ENCODE measurements at regions of chr18 and their contacts with region 1.

Region 1: DNA sequence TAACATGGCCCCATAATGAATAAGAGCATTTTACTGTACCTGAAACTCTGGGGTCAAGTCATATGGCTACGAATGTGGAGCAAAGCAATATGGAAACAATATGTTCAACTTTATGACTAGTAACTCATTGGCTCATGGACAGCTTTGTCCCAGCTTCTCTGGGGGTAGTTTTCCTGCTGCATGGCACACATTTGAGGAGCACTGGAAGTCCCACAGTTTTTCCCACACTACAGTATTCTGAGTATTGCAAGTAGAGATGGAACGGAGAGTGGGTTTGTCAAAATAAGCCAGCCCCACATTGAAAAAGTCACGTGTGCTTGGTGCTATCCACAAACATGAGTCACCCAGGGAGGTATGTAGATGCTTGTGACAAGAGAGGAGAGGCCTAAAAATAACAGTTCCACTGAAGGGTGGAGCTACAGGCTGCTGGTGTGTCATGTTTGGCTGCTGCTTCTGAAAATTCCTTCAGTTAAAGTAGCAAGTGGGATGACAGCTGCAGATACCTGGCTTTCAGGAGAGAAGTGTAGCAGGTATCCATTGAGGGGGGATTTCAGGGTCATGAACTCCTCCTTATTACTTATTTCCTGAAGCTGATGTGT is 48.2 kb upstream of the CTAGE1 start:
- DNase-seq: peak; percentile 94
- ATAC-seq: peak; percentile 67
- H3K4me3 ChIP-seq: peak overlapping the region; percentile 57
- H3K27ac ChIP-seq: peak overlapping the region; percentile 98
- H3K4me1 ChIP-seq: peaks cover 56% of the 10 kb centered on the region
- H3K27me3 ChIP-seq: no peaks in the 10 kb centered on the region
- CTCF ChIP-seq: no peak

Region 2: DNA sequence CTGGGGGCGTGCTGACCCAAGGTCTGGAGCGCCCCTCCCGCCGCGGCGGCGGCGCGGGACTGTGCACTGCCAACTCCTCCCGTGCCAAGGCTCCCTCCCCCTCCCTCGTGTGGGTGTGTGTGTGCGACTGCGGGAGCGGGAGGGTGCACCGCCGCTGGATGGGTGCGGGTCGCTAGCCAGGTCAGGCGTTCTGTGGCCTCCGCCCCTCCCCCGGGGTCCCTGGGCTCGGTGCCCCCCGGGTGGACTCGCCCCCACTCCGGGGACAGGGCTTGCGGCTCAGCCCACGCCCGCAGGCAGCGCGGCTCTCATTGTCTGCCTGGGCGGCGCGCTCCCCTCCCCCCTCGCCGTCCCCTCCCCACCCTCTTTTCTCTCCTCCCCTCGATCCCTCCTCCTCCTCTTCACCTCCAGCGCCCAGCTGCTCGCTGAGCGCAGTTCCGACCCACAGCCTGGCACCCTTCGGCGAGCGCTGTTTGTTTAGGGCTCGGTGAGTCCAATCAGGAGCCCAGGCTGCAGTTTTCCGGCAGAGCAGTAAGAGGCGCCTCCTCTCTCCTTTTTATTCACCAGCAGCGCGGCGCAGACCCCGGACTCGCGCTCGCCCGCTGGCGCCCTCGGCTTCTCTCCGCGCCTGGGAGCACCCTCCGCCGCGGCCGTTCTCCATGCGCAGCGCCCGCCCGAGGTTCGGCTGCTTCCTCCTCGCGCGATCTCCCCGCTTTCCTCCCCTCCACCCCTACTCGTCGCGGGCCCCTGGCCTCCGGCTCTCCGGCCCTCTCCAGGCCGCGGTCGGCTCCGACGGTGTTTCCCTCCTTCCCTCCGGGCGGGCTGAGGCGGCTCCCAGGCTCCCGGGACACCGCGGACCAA is 296.7 kb before region 1 on chr18 and contains the start of gene GATA6:
- CTCF ChIA-PET with region 1: no interaction called
- POLR2A ChIA-PET with region 1: interaction called, 3 read pairs
- intact Hi-C with region 1: loop called (anchors 1 kb)
- DNase-seq: peak; percentile 91
- ATAC-seq: peak; percentile 79
- H3K4me3 ChIP-seq: peak within 1 kb of the TSS; percentile 100
- H3K27ac ChIP-seq: peak within 1 kb of the TSS; percentile 80
- H3K4me1 ChIP-seq: peaks cover 13% of the 10 kb centered on the region
- H3K27me3 ChIP-seq: peaks cover 6% of the 10 kb centered on the region
- CTCF ChIP-seq: peak; percentile 55; the same call in 1 of the 2 replicates
- total RNA-seq, gene GATA6: 19.4 and 24.1 TPM in 2 replicates

Region 3: DNA sequence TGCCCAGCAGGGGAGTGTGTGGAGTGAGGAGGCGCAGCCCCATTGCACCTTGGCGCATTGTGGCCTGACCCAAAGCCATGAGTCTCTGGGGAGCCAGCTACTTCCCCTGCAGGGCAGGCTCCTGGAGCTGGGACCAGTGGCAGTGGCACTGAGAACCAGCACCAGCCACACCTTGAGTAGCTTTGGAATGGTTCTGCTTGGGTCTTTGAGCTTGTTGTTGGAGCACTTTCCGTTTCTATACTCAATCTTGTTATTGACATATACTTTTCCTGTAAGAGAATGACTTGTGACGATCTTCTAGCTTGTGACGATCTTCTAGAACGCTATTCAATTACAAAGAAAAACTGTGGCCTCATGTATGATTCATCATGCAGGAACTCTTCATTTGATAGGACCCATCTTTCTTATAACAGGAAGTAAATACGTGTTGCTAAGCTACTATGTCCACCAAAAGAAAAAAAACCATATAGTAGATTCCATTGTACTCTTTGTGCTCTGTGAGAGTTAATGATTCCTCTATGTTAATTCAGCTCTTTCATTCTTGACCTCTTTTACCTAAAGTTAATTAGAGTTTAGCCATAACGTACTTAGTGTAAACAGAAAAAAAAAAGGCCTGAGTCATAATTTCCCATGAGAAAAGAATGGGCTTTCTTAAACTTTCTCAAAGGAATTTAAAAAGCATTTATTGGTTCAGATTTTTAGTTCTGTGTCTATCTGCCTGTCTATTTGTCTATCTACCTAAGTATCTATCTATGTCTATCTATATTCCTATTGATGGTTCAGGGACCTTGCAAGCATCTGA is 183.4 kb before region 1 on chr18:
- CTCF ChIA-PET with region 1: interaction called, 3 read pairs
- POLR2A ChIA-PET with region 1: no interaction called
- intact Hi-C with region 1: loop called (anchors 1 kb)
- DNase-seq: peak; percentile 89
- ATAC-seq: peak; percentile 68
- H3K4me3 ChIP-seq: peak overlapping the region; percentile 19; the same call in 1 of the 2 replicates
- H3K27ac ChIP-seq: peak overlapping the region; percentile 83
- H3K4me1 ChIP-seq: peaks cover 46% of the 10 kb centered on the region
- H3K27me3 ChIP-seq: no peaks in the 10 kb centered on the region
- CTCF ChIP-seq: no peak

Region 4: DNA sequence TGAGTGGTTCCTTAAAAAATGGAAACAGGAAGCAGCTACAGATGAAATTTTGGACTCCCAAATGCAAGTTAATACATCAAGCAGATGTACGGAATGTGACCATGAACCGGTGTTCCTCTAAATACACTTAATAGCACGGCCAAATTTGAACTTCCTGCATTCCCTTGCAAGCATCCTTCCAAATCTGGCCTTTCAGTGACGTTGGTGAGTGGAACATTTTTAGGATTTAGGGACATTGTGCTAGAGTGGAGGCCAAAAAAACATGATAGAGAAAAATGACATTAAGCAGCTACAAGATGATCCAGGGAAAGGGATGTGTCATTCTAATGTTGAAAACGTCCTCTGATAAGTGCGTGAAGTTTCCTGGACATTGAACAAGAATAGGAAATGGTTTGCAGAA is 110.4 kb before region 1 on chr18:
- CTCF ChIA-PET with region 1: no interaction called
- POLR2A ChIA-PET with region 1: no interaction called
- intact Hi-C with region 1: no loop called
- DNase-seq: no peak
- ATAC-seq: no peak
- H3K4me3 ChIP-seq: no peak overlapping the region
- H3K27ac ChIP-seq: no peak overlapping the region
- H3K4me1 ChIP-seq: peaks cover 14% of the 10 kb centered on the region
- H3K27me3 ChIP-seq: no peaks in the 10 kb centered on the region
- CTCF ChIP-seq: no peak

Region 5: GRCh38 chr18:22385718-22386117 is 80.2 kb before region 1 on chr18:
- CTCF ChIA-PET with region 1: no interaction called
- POLR2A ChIA-PET with region 1: no interaction called
- intact Hi-C with region 1: loop called (anchors 5 kb)
- DNase-seq: peak; percentile 84
- ATAC-seq: peak; percentile 93
- H3K4me3 ChIP-seq: no peak overlapping the region
- H3K27ac ChIP-seq: peak overlapping the region; percentile 81
- H3K4me1 ChIP-seq: peaks cover 28% of the 10 kb centered on the region
- H3K27me3 ChIP-seq: no peaks in the 10 kb centered on the region
- CTCF ChIP-seq: no peak

Region 6: DNA sequence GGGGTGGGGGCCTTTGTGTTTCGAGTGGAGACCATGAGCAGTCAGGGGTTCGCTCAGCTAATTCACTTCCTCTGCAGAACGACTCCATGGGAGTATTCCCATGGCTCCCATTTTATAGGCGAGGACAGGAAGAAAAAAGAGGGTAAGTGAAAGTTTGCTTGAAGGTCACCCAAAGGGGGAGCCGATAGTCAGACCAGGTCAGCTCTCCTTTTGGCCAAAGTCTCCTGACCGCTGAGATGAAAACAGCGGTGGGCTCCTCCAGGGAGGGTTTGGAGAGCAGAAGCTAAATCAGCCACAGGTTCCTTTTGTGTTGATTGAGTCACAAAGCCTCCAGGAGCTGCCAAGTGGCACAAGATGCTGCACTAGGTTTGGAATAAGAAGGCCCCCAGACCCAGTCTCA is 14.2 kb before region 1 on chr18:
- CTCF ChIA-PET with region 1: no interaction called
- POLR2A ChIA-PET with region 1: no interaction called
- intact Hi-C with region 1: no loop called
- DNase-seq: no peak
- ATAC-seq: no peak
- H3K4me3 ChIP-seq: no peak overlapping the region
- H3K27ac ChIP-seq: no peak overlapping the region
- H3K4me1 ChIP-seq: no peaks in the 10 kb centered on the region
- H3K27me3 ChIP-seq: no peaks in the 10 kb centered on the region
- CTCF ChIP-seq: no peak

Region 7: DNA sequence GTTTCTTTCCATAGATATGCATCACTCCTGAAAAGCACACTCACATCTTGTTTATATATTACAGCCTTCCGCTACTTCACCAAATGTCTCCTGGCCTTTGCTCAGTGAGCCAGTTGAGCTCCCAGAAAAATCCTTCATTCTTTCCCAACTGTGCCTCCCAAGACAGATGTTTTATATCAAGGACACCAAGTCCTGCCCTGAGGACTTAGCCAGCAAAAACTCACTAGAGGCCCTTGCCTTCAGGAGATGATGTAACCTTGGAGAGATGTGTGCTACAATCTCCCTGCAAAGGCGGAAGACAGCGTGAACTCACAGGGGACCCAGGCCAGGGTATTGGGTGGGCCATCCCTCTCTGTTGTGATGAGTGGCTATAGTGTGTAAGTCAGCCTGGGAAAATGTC is 37.8 kb after region 1 on chr18:
- CTCF ChIA-PET with region 1: no interaction called
- POLR2A ChIA-PET with region 1: no interaction called
- intact Hi-C with region 1: loop called (anchors 1 kb)
- DNase-seq: no peak
- ATAC-seq: no peak
- H3K4me3 ChIP-seq: no peak overlapping the region
- H3K27ac ChIP-seq: peak overlapping the region; percentile 93
- H3K4me1 ChIP-seq: peaks cover 26% of the 10 kb centered on the region
- H3K27me3 ChIP-seq: no peaks in the 10 kb centered on the region
- CTCF ChIP-seq: no peak